ENCODE measurements at regions of chr13 and their contacts with region 1.

Region 1: DNA sequence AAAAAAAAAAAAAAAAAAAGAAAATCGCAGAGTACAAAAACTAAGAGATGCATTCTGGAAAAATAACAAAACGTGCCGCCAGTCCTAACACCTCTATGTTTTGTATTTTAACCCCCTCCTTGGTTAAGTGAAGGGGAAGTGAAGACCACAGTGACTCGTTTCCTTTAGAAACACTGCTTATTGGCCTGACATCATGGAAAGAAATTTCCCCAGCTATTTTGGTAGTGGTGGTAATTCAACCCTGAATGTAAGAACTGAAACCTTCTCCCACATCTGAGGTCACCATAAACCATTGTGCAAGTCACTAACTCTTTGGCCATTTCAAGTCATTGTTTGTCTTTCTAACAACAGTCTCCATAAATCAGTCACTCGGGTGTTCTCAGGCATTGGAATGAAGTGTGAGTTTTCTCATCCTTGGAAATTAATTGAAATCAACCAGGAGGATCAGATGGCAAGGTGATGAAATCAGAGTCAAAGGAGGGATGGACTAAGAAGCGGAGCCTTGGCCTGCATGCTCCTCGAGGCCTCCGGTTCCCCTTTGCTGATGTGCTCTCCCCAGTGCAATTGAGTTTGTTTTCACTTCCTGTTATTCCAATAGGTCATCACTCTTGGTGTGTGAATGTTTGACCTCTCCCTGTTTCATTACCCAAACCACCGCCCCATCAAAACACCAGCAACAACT is 443.9 kb downstream of the FGF9 start:
- DNase-seq: peak; percentile 86 to 97 (median 90)
- H3K4me3 ChIP-seq: peak overlapping the region in 1 of 3 experiments; percentile 31
- H3K4me3 Mint-ChIP-seq: peak overlapping the region in 1 of 2 donors; percentile 72
- H3K27ac ChIP-seq: peak overlapping the region; percentile 78 to 91
- H3K27ac Mint-ChIP-seq: peak overlapping the region; percentile 95 to 100 (median 99)
- H3K4me1 ChIP-seq: peaks cover 26% of the 10 kb centered on the region in 2 donors
- H3K4me1 Mint-ChIP-seq: peaks cover 21% of the 10 kb centered on the region
- H3K27me3 ChIP-seq: no peaks in the 10 kb centered on the region
- H3K27me3 Mint-ChIP-seq: peaks cover 0 to 5% (median 3%) of the 10 kb centered on the region in 3 donors
- CTCF ChIP-seq: no peak

Region 2: GRCh38 chr13:21957833-21958232 is 156.9 kb before region 1 on chr13:
- intact Hi-C with region 1: no loop called
- DNase-seq: no peak
- H3K4me3 ChIP-seq: no peak overlapping the region
- H3K4me3 Mint-ChIP-seq: no peak overlapping the region
- H3K27ac ChIP-seq: no peak overlapping the region
- H3K27ac Mint-ChIP-seq: no peak overlapping the region
- H3K4me1 ChIP-seq: no peaks in the 10 kb centered on the region
- H3K4me1 Mint-ChIP-seq: no peaks in the 10 kb centered on the region
- H3K27me3 ChIP-seq: no peaks in the 10 kb centered on the region
- H3K27me3 Mint-ChIP-seq: peaks cover 0 to 2% (median 0%) of the 10 kb centered on the region in 3 donors
- CTCF ChIP-seq: no peak

Region 3: GRCh38 chr13:22161871-22162270 is 47.1 kb after region 1 on chr13:
- intact Hi-C with region 1: loop called in 1 of 2 experiments (anchors 5 kb)
- DNase-seq: no peak
- H3K4me3 ChIP-seq: no peak overlapping the region
- H3K4me3 Mint-ChIP-seq: no peak overlapping the region
- H3K27ac ChIP-seq: no peak overlapping the region
- H3K27ac Mint-ChIP-seq: peak overlapping the region in 4 of 7 donors; percentile 5 to 63 (median 11)
- H3K4me1 ChIP-seq: peaks cover 11 to 16% of the 10 kb centered on the region in 2 donors
- H3K4me1 Mint-ChIP-seq: peaks cover 19% of the 10 kb centered on the region
- H3K27me3 ChIP-seq: no peaks in the 10 kb centered on the region
- H3K27me3 Mint-ChIP-seq: peaks cover 0 to 5% (median 2%) of the 10 kb centered on the region in 3 donors
- CTCF ChIP-seq: no peak

Region 4: GRCh38 chr13:23146811-23147625 is 1032.2 kb after region 1 on chr13:
- intact Hi-C with region 1: loop called in 1 of 2 experiments (anchors 10 kb)
- DNase-seq: peak; percentile 80 to 88 (median 86)
- H3K4me3 ChIP-seq: peak overlapping the region in 2 of 3 experiments; percentile 38 to 66
- H3K4me3 Mint-ChIP-seq: peak overlapping the region; percentile 70 to 82
- H3K27ac ChIP-seq: peak overlapping the region; percentile 67 to 88
- H3K27ac Mint-ChIP-seq: peak overlapping the region; percentile 93 to 97 (median 95)
- H3K4me1 ChIP-seq: peaks cover 27 to 38% of the 10 kb centered on the region in 2 donors
- H3K4me1 Mint-ChIP-seq: peaks cover 28% of the 10 kb centered on the region
- H3K27me3 ChIP-seq: no peaks in the 10 kb centered on the region
- H3K27me3 Mint-ChIP-seq: peaks cover 0 to 2% (median 0%) of the 10 kb centered on the region in 3 donors
- CTCF ChIP-seq: no peak